Activated T-helper 1 cell treated with anti-CD3 and anti-CD28 coated beads, Interleukin-12 subunit alpha, Interleukin-12 subunit beta, Interleukin-2, Interleukin-4 antibody, amounts not matched to agents 30 ng/mL and 10 ng/mL and 1 ng/mL, durations not matched to agents 14 hours and 24 hours and 36 hours (primary cell): ENCODE measurements at regions of chr12 and their contacts with region 1.

Region 1: DNA sequence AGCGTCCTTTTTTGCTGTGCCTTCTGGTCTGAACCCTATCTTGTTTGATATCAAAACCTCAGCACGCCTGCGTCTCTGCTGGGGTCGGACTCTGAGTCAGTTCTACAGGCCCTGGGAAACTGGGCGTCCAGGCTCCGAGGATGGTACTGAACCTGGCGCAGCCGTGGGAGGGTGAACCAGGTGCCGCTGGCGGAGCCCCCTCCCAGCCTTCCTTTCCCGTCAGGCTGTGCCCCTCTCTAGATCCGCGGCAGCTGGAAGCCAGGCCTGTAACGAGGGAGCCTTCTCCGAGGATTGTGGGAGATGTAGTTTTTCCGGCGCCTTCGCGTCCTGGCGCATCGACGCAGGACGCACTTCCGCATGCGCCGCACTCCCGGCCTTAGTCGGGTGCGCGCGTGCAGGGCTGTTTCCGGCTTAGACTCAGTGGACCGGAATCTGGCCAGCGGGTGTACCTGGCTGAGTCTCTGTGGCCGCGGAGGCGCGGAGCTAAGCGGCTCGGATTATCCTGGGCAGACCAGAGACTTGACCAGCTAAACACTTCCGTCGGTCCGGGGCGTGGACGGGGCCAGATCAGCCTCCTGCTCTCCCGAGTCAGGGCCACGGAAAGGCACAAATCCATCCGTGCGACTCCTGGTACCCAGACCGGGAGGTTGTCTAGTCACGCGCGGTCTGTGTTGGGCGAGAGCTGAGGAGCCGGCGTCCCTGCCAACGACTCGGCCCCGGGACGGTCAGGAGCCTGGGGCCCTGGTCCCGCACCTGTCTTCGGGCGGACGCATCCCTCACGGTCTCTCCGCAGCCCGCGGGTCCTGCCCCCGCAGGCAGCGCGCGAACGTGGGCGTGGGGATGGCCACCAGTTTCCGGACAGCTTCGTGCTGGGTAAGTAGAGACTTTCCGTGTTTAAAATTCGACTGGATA is at the start of gene ZNF26:
- DNase-seq: peak; percentile 84
- H3K4me3 Mint-ChIP-seq: peak within 1 kb of the TSS; percentile 90
- H3K27ac Mint-ChIP-seq: peak within 1 kb of the TSS; percentile 92
- H3K4me1 Mint-ChIP-seq: peaks cover 22% of the 10 kb centered on the region
- H3K27me3 Mint-ChIP-seq: no peaks in the 10 kb centered on the region
- total RNA-seq, gene ZNF26: 18.2 and 22.1 TPM in 2 replicates

Region 2: DNA sequence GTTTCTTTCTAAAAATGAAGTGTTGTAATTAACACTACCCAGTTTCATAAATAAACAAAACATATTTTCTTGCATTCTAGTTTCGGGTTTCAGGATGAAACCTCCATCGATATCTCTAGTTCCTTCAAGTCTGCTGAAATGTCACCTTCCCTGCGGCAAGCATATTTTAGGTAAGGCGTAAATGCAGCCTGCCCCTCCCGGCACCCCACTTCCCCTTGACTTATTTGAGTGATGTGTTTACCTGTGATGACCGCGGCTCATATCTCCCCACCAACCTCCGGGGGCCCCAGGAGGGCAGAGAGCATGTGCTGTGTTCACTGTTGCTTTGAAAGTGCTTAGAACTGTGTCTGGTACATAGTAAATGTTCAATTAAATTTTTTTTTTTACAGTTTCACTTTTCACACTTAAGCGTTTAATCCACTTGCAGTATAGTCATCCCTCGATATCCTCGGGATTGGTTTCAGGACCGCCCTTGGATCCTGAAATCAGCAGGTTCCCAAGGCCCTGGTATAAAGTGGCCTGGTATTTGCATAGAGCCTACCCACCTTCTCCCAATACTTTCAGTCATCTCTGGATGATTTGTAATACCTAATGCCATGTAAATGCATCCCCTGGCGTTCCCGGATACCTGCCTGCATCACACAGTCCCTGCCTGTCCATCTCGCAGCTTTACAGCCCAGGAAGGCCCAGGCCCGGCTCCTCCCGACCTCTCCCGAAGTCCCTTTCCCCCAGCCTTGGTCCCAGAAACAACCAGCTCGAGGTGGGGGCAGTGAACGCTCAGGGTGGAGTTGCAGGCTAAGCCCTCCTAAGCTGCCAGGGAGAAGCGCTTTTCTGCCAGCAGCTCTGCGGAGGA is 536.5 kb before region 1 on chr12:
- intact Hi-C with region 1: no loop called
- DNase-seq: no peak
- H3K4me3 Mint-ChIP-seq: no peak overlapping the region
- H3K27ac Mint-ChIP-seq: peak overlapping the region; percentile 67
- H3K4me1 Mint-ChIP-seq: peaks cover 23% of the 10 kb centered on the region
- H3K27me3 Mint-ChIP-seq: peaks cover 3% of the 10 kb centered on the region

Region 3: DNA sequence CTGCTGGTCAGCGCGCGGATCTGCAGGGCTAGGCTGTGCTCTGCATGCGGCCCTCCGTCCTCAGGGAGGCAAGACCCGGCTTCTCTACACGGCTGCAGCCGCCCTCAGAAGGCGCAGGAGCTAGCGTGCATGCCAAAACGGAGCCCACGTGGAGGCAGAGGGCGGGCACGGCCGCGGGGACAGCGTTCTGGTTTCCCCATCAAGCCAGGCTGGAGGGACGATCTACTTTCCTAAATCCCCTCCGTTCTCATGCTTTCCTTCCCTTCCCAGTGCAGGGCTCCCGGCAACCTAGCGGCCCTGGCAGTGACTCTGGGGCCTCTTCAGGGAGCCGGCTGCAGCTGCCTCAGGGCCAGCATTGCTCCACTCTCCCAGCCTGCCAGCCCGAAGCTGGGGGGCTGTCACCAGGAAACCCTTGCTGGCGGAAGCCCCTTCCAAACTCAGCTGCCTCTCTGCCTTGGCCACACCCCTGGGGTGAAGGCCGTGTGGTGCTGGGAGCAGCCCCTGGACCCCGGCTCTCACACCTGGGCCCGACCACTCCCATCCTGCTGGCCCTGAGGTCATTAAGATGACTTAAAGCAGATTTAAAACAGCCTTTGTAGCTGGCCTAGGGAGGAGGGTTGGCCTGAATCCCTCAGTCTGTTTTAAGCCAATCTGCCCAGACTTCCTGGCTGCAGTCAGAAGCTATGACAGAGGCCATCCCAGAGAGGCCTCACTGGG is 148.4 kb before region 1 on chr12:
- intact Hi-C with region 1: no loop called
- DNase-seq: no peak
- H3K4me3 Mint-ChIP-seq: no peak overlapping the region
- H3K27ac Mint-ChIP-seq: no peak overlapping the region
- H3K4me1 Mint-ChIP-seq: peaks cover 32% of the 10 kb centered on the region
- H3K27me3 Mint-ChIP-seq: no peaks in the 10 kb centered on the region

Region 4: GRCh38 chr12:132956011-132956788 is 30.1 kb before region 1 on chr12 and contains the start of gene ZNF605:
- intact Hi-C with region 1: loop called (anchors 1 kb)
- DNase-seq: peak; percentile 85
- H3K4me3 Mint-ChIP-seq: peak within 1 kb of the TSS; percentile 98
- H3K27ac Mint-ChIP-seq: peak within 1 kb of the TSS; percentile 94
- H3K4me1 Mint-ChIP-seq: peaks cover 18% of the 10 kb centered on the region
- H3K27me3 Mint-ChIP-seq: no peaks in the 10 kb centered on the region
- total RNA-seq, gene ZNF605: 6.3 and 7.5 TPM in 2 replicates

Region 5: GRCh38 chr12:133227281-133227852 is 241.1 kb after region 1 on chr12:
- intact Hi-C with region 1: no loop called
- DNase-seq: no peak
- H3K4me3 Mint-ChIP-seq: no peak overlapping the region
- H3K27ac Mint-ChIP-seq: no peak overlapping the region
- H3K4me1 Mint-ChIP-seq: no peaks in the 10 kb centered on the region
- H3K27me3 Mint-ChIP-seq: no peaks in the 10 kb centered on the region